B cell (primary cell): ENCODE measurements at regions of chr2 and their contacts with region 1.

Region 1: GRCh38 chr2:96423828-96424227 is 81.3 kb downstream of the NEURL3 start:
- DNase-seq: no peak
- ATAC-seq: no peak
- H3K4me3 ChIP-seq: no peak overlapping the region
- H3K4me3 Mint-ChIP-seq: no peak overlapping the region
- H3K27ac ChIP-seq: no peak overlapping the region
- H3K27ac Mint-ChIP-seq: no peak overlapping the region
- H3K4me1 ChIP-seq: no peaks in the 10 kb centered on the region
- H3K4me1 Mint-ChIP-seq: no peaks in the 10 kb centered on the region
- H3K27me3 ChIP-seq: peaks cover 0 to 17% (median 7%) of the 10 kb centered on the region in 4 experiments
- H3K27me3 Mint-ChIP-seq: peaks cover 59% of the 10 kb centered on the region
- CTCF ChIP-seq: no peak

Region 2: GRCh38 chr2:96260404-96261260 is 163.2 kb before region 1 on chr2:
- CTCF ChIA-PET with region 1: no interaction called
- POLR2A ChIA-PET with region 1: no interaction called
- intact Hi-C with region 1: no loop called
- DNase-seq: peak; percentile 62
- ATAC-seq: peak; percentile 55
- H3K4me3 ChIP-seq: no peak overlapping the region
- H3K4me3 Mint-ChIP-seq: peak overlapping the region; percentile 64
- H3K27ac ChIP-seq: peak overlapping the region; percentile 44 to 64
- H3K27ac Mint-ChIP-seq: peak overlapping the region; percentile 92
- H3K4me1 ChIP-seq: peaks cover 65 to 75% of the 10 kb centered on the region in 2 donors
- H3K4me1 Mint-ChIP-seq: peaks cover 78% of the 10 kb centered on the region
- H3K27me3 ChIP-seq: no peaks in the 10 kb centered on the region
- H3K27me3 Mint-ChIP-seq: no peaks in the 10 kb centered on the region
- CTCF ChIP-seq: peak; percentile 29

Region 3: GRCh38 chr2:96396095-96396494 is 27.7 kb before region 1 on chr2:
- CTCF ChIA-PET with region 1: no interaction called
- POLR2A ChIA-PET with region 1: no interaction called
- intact Hi-C with region 1: no loop called
- DNase-seq: no peak
- ATAC-seq: no peak
- H3K4me3 ChIP-seq: no peak overlapping the region
- H3K4me3 Mint-ChIP-seq: no peak overlapping the region
- H3K27ac ChIP-seq: no peak overlapping the region
- H3K27ac Mint-ChIP-seq: no peak overlapping the region
- H3K4me1 ChIP-seq: no peaks in the 10 kb centered on the region
- H3K4me1 Mint-ChIP-seq: no peaks in the 10 kb centered on the region
- H3K27me3 ChIP-seq: no peaks in the 10 kb centered on the region
- H3K27me3 Mint-ChIP-seq: peaks cover 12% of the 10 kb centered on the region
- CTCF ChIP-seq: no peak

Region 4: GRCh38 chr2:96407041-96407918 is 16.5 kb before region 1 on chr2:
- CTCF ChIA-PET with region 1: interaction called, 12 read pairs
- POLR2A ChIA-PET with region 1: no interaction called
- intact Hi-C with region 1: no loop called
- DNase-seq: peak; percentile 79
- ATAC-seq: peak; percentile 88
- H3K4me3 ChIP-seq: peak overlapping the region in 1 of 5 experiments; percentile 6
- H3K4me3 Mint-ChIP-seq: no peak overlapping the region
- H3K27ac ChIP-seq: no peak overlapping the region
- H3K27ac Mint-ChIP-seq: no peak overlapping the region
- H3K4me1 ChIP-seq: peaks cover 7 to 9% of the 10 kb centered on the region in 2 donors
- H3K4me1 Mint-ChIP-seq: peaks cover 9% of the 10 kb centered on the region
- H3K27me3 ChIP-seq: no peaks in the 10 kb centered on the region
- H3K27me3 Mint-ChIP-seq: peaks cover 3% of the 10 kb centered on the region
- CTCF ChIP-seq: peak; percentile 85

Region 5: DNA sequence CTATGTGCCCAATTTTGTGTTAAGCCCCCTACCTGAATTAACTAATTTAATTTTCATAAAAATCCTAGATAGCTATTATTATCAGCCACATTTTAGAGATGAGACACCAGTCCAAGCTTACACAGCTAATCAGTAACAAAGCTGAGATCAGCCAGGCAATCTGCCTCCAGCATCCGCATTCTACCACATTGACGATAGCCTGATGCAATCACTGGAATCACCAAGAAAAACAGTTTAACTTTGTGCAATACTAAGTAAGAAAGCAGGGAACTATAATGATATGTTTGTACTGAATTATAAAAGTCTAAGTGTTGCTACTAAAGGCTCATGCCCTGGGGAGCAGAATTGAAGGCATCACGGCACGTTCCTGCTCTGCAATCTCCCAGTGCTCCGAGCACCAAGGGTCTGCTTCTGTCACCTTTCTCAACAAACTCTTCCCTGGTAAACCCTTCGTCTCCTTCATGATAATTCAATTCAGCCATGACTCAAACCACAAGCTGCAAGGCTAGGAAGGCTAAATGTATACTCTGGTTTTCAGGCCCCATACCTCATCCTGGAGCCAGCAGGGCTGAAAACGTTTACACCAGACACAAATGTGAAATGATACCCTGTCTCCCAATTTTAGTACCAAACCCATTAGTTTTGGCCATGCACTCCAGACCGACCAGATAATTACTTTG is 194.9 kb after region 1 on chr2:
- CTCF ChIA-PET with region 1: no interaction called
- POLR2A ChIA-PET with region 1: no interaction called
- intact Hi-C with region 1: no loop called
- DNase-seq: no peak
- ATAC-seq: no peak
- H3K4me3 ChIP-seq: no peak overlapping the region
- H3K4me3 Mint-ChIP-seq: no peak overlapping the region
- H3K27ac ChIP-seq: no peak overlapping the region
- H3K27ac Mint-ChIP-seq: no peak overlapping the region
- H3K4me1 ChIP-seq: no peaks in the 10 kb centered on the region
- H3K4me1 Mint-ChIP-seq: no peaks in the 10 kb centered on the region
- H3K27me3 ChIP-seq: no peaks in the 10 kb centered on the region
- H3K27me3 Mint-ChIP-seq: no peaks in the 10 kb centered on the region
- CTCF ChIP-seq: no peak